GM12878 (cell line): ENCODE measurements at regions of chr13 and their contacts with region 1.

Region 1: GRCh38 chr13:96020155-96020575 is 33.0 kb downstream of the UGGT2 start:
- DNase-seq: peak; percentile 23
- ATAC-seq: peak; percentile 97
- H3K4me3 ChIP-seq: no peak overlapping the region
- H3K27ac ChIP-seq: no peak overlapping the region
- H3K4me1 ChIP-seq: no peaks in the 10 kb centered on the region
- H3K27me3 ChIP-seq: no peaks in the 10 kb centered on the region
- CTCF ChIP-seq: peak; percentile 66 to 89 (median 78); a peak in 5 of 6 replicates
- EP300 ChIP-seq: no peak
- POLR2A ChIP-seq: no peak
- RAD21 ChIP-seq: peak; percentile 82

Region 2: GRCh38 chr13:96034662-96035061 is 14.5 kb after region 1 on chr13:
- CTCF ChIA-PET with region 1: interaction called, 17 read pairs
- POLR2A ChIA-PET with region 1: no interaction called
- RAD21 ChIA-PET with region 1: no interaction called
- SMC1A ChIA-PET with region 1: interaction called, 6 read pairs
- in situ Hi-C with region 1: no loop called
- intact Hi-C with region 1: no loop called
- DNase-seq: no peak
- ATAC-seq: no peak
- H3K4me3 ChIP-seq: no peak overlapping the region
- H3K27ac ChIP-seq: no peak overlapping the region
- H3K4me1 ChIP-seq: no peaks in the 10 kb centered on the region
- H3K27me3 ChIP-seq: no peaks in the 10 kb centered on the region
- CTCF ChIP-seq: no peak
- EP300 ChIP-seq: no peak
- POLR2A ChIP-seq: no peak
- RAD21 ChIP-seq: no peak

Region 3: DNA sequence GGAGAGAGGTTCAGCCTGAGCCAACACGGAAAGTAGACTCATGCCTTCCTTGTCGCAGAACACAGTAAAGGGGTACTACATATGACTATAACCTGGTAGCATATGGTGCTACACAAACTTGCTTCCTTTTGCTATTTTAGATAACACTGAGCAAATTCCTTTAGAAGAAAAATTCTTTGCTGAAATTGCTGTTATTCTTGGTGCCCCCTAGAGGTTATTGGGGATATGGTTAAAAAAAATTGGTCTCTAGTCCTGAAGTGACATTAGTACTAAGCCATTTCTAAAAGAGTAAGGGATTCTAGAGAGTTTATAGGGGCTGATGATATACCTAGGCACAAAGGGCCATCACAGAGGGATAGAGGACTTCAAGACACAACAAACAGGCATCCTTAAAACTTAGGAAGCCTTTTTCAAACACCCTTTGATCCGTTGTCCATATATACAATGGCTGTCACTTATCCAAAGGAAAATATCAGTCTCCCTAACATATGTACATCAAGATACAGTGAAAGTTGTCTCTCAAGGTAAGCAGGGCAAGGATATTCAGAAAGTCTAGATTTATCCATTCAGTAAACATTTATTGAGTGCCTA is 55.9 kb after region 1 on chr13:
- CTCF ChIA-PET with region 1: interaction called, 46 read pairs
- POLR2A ChIA-PET with region 1: no interaction called
- RAD21 ChIA-PET with region 1: interaction called, 10 read pairs
- SMC1A ChIA-PET with region 1: interaction called, 20 read pairs
- in situ Hi-C with region 1: no loop called
- intact Hi-C with region 1: loop called (anchors 1 kb)
- DNase-seq: no peak
- ATAC-seq: peak; percentile 67
- H3K4me3 ChIP-seq: no peak overlapping the region
- H3K27ac ChIP-seq: no peak overlapping the region
- H3K4me1 ChIP-seq: no peaks in the 10 kb centered on the region
- H3K27me3 ChIP-seq: no peaks in the 10 kb centered on the region; a peak in 2 of 4 replicates
- CTCF ChIP-seq: peak; percentile 47 to 61 (median 57); a peak in 5 of 6 replicates
- EP300 ChIP-seq: no peak
- POLR2A ChIP-seq: no peak
- RAD21 ChIP-seq: peak; percentile 52; the same call in 1 of the 2 replicates

Region 4: DNA sequence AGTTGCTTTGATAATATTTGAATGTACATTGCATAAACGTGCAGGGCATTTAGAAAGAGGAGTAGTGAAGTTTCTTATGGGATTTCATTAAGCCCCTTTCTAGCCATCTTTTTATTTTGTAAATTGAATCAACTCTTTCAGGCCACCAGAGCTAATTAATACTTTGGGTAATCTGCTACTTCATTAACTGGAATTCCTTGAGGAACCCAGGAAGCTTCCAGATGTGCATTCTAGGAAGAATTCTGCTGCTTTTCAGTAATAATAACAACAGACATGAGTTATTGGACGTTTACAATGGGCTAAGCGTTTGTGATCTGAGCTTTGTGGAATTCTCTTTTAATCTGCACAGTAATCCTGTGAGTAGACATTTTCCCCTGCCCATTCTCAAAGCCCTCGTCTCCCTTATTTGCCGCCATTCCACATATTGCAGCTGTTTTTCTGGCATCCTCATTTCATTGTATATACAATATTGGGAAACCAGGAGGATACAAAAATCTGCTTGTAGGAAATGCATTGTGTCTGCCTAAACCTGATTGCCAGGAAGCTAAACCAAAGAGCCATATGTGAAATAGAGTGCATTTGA is 173.7 kb after region 1 on chr13:
- CTCF ChIA-PET with region 1: no interaction called
- POLR2A ChIA-PET with region 1: no interaction called
- RAD21 ChIA-PET with region 1: no interaction called
- SMC1A ChIA-PET with region 1: no interaction called
- in situ Hi-C with region 1: no loop called
- intact Hi-C with region 1: no loop called
- DNase-seq: no peak
- ATAC-seq: no peak
- H3K4me3 ChIP-seq: no peak overlapping the region
- H3K27ac ChIP-seq: no peak overlapping the region
- H3K4me1 ChIP-seq: no peaks in the 10 kb centered on the region
- H3K27me3 ChIP-seq: no peaks in the 10 kb centered on the region; a peak in 1 of 4 replicates
- CTCF ChIP-seq: no peak
- EP300 ChIP-seq: no peak
- POLR2A ChIP-seq: no peak
- RAD21 ChIP-seq: no peak

Region 5: DNA sequence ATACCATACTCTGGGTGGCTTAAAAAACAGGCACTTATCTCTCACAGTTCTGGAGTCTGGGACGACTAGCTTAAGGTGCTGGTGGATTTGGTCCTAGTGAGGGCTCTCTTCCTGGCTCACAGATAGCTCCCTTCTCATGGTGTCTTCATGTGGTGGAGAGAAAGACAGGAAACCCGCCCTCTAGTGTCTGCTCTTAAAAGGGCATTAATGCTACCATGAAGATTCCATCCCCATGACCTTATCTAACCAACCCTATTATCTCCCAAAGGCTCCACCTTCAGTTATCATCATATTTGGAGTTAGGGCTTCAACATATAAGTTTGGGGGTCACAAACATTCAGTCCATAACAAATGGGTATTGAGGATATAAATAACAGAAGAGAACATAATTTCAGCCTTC is 209.2 kb after region 1 on chr13:
- CTCF ChIA-PET with region 1: interaction called, 36 read pairs
- POLR2A ChIA-PET with region 1: no interaction called
- RAD21 ChIA-PET with region 1: interaction called, 9 read pairs
- SMC1A ChIA-PET with region 1: interaction called, 11 read pairs
- in situ Hi-C with region 1: loop called (anchors 10 kb)
- intact Hi-C with region 1: loop called (anchors 1 kb)
- DNase-seq: no peak
- ATAC-seq: peak; percentile 83
- H3K4me3 ChIP-seq: no peak overlapping the region
- H3K27ac ChIP-seq: no peak overlapping the region
- H3K4me1 ChIP-seq: no peaks in the 10 kb centered on the region
- H3K27me3 ChIP-seq: no peaks in the 10 kb centered on the region
- CTCF ChIP-seq: peak; percentile 51 to 55 (median 54)
- EP300 ChIP-seq: no peak
- POLR2A ChIP-seq: no peak
- RAD21 ChIP-seq: peak; percentile 38

Region 6: GRCh38 chr13:96817336-96817941 is 797.3 kb after region 1 on chr13:
- CTCF ChIA-PET with region 1: interaction called, 47 read pairs
- POLR2A ChIA-PET with region 1: no interaction called
- RAD21 ChIA-PET with region 1: interaction called, 33 read pairs
- SMC1A ChIA-PET with region 1: interaction called, 10 read pairs
- in situ Hi-C with region 1: loop called (anchors 10 kb)
- intact Hi-C with region 1: loop called (anchors 1 kb)
- DNase-seq: no peak
- ATAC-seq: no peak
- H3K4me3 ChIP-seq: no peak overlapping the region
- H3K27ac ChIP-seq: no peak overlapping the region
- H3K4me1 ChIP-seq: no peaks in the 10 kb centered on the region
- H3K27me3 ChIP-seq: no peaks in the 10 kb centered on the region
- CTCF ChIP-seq: peak; percentile 31 to 35 (median 32); a peak in 2 of 6 replicates
- EP300 ChIP-seq: no peak
- POLR2A ChIP-seq: no peak
- RAD21 ChIP-seq: peak; percentile 44; the same call in 1 of the 2 replicates

Region 7: DNA sequence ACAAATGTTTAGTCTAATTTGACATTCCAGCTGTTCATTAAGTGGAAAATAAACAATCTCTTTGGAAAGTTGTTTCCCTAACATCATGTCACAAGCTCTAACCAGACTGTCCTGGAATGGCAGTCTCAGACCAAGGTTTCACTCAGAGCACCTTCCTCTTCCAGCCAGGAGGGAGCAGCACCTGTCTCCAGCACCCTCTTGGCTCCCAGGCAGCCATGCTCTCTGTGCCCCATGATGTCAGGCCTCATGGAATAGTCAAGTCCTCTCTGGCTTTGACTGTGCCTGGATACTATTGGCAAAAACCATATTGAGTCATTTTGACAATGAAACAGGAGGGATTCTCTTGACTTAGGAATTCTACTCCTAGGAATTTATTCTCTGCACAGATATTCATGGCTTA is 802.7 kb after region 1 on chr13:
- CTCF ChIA-PET with region 1: interaction called, 47 read pairs
- POLR2A ChIA-PET with region 1: no interaction called
- RAD21 ChIA-PET with region 1: interaction called, 33 read pairs
- SMC1A ChIA-PET with region 1: interaction called, 10 read pairs
- in situ Hi-C with region 1: loop called (anchors 10 kb)
- intact Hi-C with region 1: no loop called
- DNase-seq: no peak
- ATAC-seq: peak; percentile 76
- H3K4me3 ChIP-seq: no peak overlapping the region
- H3K27ac ChIP-seq: no peak overlapping the region
- H3K4me1 ChIP-seq: no peaks in the 10 kb centered on the region
- H3K27me3 ChIP-seq: no peaks in the 10 kb centered on the region
- CTCF ChIP-seq: peak; percentile 27 to 33 (median 33); a peak in 4 of 6 replicates
- EP300 ChIP-seq: no peak
- POLR2A ChIP-seq: no peak
- RAD21 ChIP-seq: peak; percentile 21; the same call in 1 of the 2 replicates

Region 8: DNA sequence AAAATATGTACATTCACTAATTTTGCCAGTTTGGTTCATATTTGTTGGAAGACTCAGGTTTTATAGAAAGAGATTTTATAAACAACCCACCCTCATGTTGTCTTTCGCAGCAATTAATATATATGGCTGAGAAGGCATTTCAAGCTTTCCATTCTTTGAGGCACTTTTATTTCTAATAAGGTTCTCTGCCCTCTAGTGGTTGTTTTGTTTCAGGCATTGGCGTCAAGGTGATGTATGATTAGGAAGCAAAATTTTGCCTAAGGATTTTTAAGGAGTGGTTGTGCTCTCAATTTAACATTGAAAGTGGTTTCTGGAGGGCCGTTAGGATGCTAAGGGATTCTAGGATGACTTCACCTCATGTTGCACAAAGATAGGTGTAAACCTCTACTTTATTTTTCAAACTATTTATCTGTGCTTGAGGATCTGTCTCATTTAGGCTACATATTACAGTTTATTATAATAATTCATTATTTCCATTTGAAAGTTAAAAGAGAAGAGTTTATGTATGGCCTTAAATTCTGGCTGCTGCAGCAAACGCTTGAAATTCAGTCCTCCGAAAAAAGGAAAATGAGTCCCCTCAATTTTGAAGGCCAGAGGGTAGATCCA is 938.2 kb after region 1 on chr13:
- CTCF ChIA-PET with region 1: interaction called, 11 read pairs
- POLR2A ChIA-PET with region 1: no interaction called
- RAD21 ChIA-PET with region 1: interaction called, 17 read pairs
- SMC1A ChIA-PET with region 1: interaction called, 5 read pairs
- in situ Hi-C with region 1: no loop called
- intact Hi-C with region 1: loop called (anchors 5 kb)
- DNase-seq: no peak
- ATAC-seq: peak; percentile 61
- H3K4me3 ChIP-seq: no peak overlapping the region
- H3K27ac ChIP-seq: no peak overlapping the region
- H3K4me1 ChIP-seq: no peaks in the 10 kb centered on the region
- H3K27me3 ChIP-seq: no peaks in the 10 kb centered on the region
- CTCF ChIP-seq: peak; percentile 48 to 72 (median 70); a peak in 5 of 6 replicates
- EP300 ChIP-seq: no peak
- POLR2A ChIP-seq: no peak
- RAD21 ChIP-seq: peak; percentile 39